Activated CD8-positive, alpha-beta T cell treated with anti-CD3 and anti-CD28 coated beads for 36 hours (primary cell): ENCODE measurements at regions of chr20 and their contacts with region 1.

Region 1: DNA sequence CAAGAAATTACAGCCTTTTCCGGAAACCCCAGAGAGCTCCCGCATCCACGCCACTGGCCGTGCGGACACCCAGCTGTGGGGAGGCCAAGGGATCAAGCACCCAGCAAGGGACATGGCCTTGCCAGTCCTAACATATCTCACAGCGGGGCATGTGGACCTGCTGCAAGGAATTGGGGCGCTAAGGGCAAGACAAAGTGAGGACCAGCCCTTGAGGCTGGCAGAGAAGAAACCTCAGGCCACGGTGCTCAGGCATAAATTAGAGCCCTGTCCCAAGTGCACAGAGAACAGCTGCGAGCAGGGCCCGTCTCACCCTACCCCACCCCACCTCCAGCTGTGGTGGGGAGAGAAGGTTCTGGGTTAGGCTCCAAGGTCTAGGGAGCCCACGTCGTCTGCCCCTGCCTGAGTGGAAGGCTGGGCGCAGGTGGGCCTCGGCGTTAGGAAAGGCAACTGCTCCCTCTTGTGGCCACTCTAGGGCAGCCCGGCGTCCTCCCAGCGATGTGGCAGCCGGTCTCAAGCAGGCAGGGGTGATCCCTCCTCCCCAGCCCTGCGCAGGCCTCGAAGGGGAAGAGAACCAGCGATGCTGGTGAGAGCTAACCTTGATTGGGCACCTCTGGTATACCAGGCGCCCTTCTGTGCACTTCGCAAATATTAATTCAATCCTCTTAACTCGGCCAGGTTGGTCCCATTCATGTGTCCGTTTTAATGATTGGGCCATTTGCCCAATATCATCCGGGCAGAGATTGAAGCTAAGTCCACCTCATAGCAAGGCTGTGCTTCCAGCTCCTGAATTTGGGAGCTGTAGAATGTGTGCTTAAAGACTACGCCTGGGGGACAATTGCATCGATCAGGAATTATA is 235.8 kb downstream of the NFATC2 start:
- DNase-seq: peak; percentile 82
- ATAC-seq: peak; percentile 99
- H3K4me3 Mint-ChIP-seq: no peak overlapping the region
- H3K27ac Mint-ChIP-seq: no peak overlapping the region
- H3K4me1 Mint-ChIP-seq: peaks cover 3% of the 10 kb centered on the region
- H3K27me3 Mint-ChIP-seq: peaks cover 11% of the 10 kb centered on the region
- CTCF ChIP-seq: peak; percentile 92

Region 2: GRCh38 chr20:50987592-50988210 is 319.0 kb before region 1 on chr20:
- CTCF ChIA-PET with region 1: interaction called, 210 read pairs
- POLR2A ChIA-PET with region 1: interaction called, 5 read pairs
- intact Hi-C with region 1: loop called (anchors 2 kb)
- DNase-seq: peak; percentile 70
- ATAC-seq: peak; percentile 98
- H3K4me3 Mint-ChIP-seq: no peak overlapping the region
- H3K27ac Mint-ChIP-seq: no peak overlapping the region
- H3K4me1 Mint-ChIP-seq: no peaks in the 10 kb centered on the region
- H3K27me3 Mint-ChIP-seq: peaks cover 20% of the 10 kb centered on the region
- CTCF ChIP-seq: peak; percentile 89

Region 3: GRCh38 chr20:51275826-51276225 is 30.9 kb before region 1 on chr20:
- CTCF ChIA-PET with region 1: interaction called, 19 read pairs
- POLR2A ChIA-PET with region 1: no interaction called
- intact Hi-C with region 1: no loop called
- DNase-seq: no peak
- ATAC-seq: no peak
- H3K4me3 Mint-ChIP-seq: no peak overlapping the region
- H3K27ac Mint-ChIP-seq: no peak overlapping the region
- H3K4me1 Mint-ChIP-seq: no peaks in the 10 kb centered on the region
- H3K27me3 Mint-ChIP-seq: peaks cover 35% of the 10 kb centered on the region
- CTCF ChIP-seq: no peak

Region 4: DNA sequence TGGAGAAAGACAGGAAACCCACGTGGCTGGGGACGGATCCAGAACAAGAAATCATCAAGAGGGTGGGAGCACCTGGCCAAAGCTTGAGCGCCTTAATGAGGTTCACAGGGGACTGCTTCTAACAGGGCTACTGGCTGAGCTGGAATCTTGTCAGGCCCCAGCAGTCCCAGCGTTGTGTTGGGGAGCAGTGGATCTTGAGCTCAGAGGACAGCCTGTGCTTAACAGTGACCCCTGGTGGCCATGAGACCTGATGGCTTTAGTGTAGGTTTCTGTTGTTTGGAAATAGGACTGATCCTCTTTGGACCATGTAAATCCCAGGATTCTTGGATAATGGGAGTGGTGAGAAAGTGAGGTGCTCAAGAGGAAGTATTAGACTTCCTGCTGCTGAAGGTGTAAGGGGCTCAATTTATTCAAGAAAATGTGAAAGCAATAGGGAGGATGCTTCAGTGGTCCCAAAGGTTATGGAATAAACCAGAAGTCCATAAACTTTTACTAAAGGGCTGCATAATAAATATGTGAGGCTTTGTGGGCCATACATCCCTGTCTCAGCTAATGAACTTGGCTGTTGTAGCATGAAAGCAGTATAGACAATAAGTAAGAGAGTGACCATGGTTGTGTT is 19.6 kb after region 1 on chr20:
- CTCF ChIA-PET with region 1: interaction called, 44 read pairs
- POLR2A ChIA-PET with region 1: no interaction called
- intact Hi-C with region 1: no loop called
- DNase-seq: no peak
- ATAC-seq: no peak
- H3K4me3 Mint-ChIP-seq: no peak overlapping the region
- H3K27ac Mint-ChIP-seq: no peak overlapping the region
- H3K4me1 Mint-ChIP-seq: no peaks in the 10 kb centered on the region
- H3K27me3 Mint-ChIP-seq: no peaks in the 10 kb centered on the region
- CTCF ChIP-seq: peak; percentile 13